ENCODE measurements at regions of chr11 and their contacts with region 1.

Region 1: GRCh38 chr11:10307442-10308207 is 2.8 kb downstream of the ADM start:
- DNase-seq: peak; percentile 88 to 96 (median 88)
- ATAC-seq: peak; percentile 66
- H3K4me3 ChIP-seq: peak overlapping the region; percentile 37 to 60
- H3K27ac ChIP-seq: peak overlapping the region; percentile 36 to 94
- H3K4me1 ChIP-seq: peaks cover 27 to 65% of the 10 kb centered on the region in 2 donors
- H3K27me3 ChIP-seq: peaks cover 0 to 38% of the 10 kb centered on the region in 2 donors
- CTCF ChIP-seq: peak; percentile 97 to 98

Region 2: GRCh38 chr11:10150800-10151199 is 156.8 kb before region 1 on chr11:
- intact Hi-C with region 1: no loop called
- DNase-seq: no peak
- ATAC-seq: no peak
- H3K4me3 ChIP-seq: no peak overlapping the region
- H3K27ac ChIP-seq: no peak overlapping the region
- H3K4me1 ChIP-seq: no peaks in the 10 kb centered on the region
- H3K27me3 ChIP-seq: no peaks in the 10 kb centered on the region
- CTCF ChIP-seq: no peak

Region 3: GRCh38 chr11:10208131-10208575 is 99.5 kb before region 1 on chr11:
- intact Hi-C with region 1: loop called (anchors 5 to 10 kb)
- DNase-seq: peak in 2 of 4 donors; percentile 35 to 44
- ATAC-seq: peak; percentile 81
- H3K4me3 ChIP-seq: no peak overlapping the region
- H3K27ac ChIP-seq: no peak overlapping the region
- H3K4me1 ChIP-seq: peaks cover 0 to 12% of the 10 kb centered on the region in 2 donors
- H3K27me3 ChIP-seq: no peaks in the 10 kb centered on the region
- CTCF ChIP-seq: peak; percentile 63 to 68

Region 4: GRCh38 chr11:10455637-10456487 is 148.2 kb after region 1 on chr11:
- intact Hi-C with region 1: no loop called
- DNase-seq: peak in 3 of 4 donors; percentile 51 to 87 (median 70)
- ATAC-seq: peak; percentile 72
- H3K4me3 ChIP-seq: peak overlapping the region; percentile 4 to 48
- H3K27ac ChIP-seq: peak overlapping the region; percentile 4 to 92
- H3K4me1 ChIP-seq: peaks cover 6 to 89% of the 10 kb centered on the region in 2 donors
- H3K27me3 ChIP-seq: peaks cover 0 to 5% of the 10 kb centered on the region in 2 donors
- CTCF ChIP-seq: no peak

Measured in left lung (tissue), 14 donors.